ENCODE measurements at regions of chr5 and their contacts with region 1.

Region 1: DNA sequence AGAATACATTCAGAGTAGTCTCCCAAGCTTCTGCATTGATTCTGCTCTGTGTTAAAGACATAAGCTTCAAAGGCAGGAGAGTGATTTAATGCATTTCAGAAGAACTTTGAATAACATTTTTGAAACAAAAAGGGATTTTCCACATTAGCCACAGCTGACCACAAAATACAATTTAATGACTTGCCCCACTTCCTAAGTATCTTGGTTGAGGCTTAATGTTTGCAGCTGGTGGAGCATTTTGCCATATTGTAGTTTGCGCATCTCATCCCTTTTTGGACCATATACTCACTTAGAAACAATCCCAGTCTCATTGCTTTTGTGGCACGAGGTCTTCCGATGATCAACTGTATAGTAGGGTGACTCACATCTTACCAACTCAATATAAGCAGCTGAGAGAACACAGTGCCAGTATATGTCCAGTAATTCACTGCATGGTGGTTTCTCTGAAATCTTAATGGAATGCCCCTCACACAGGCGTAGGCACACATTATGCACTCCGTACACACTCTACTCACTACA is 455.8 kb upstream of the PTGER4 start:
- DNase-seq: peak; percentile 39
- H3K4me3 Mint-ChIP-seq: peak overlapping the region; percentile 66
- H3K27ac Mint-ChIP-seq: peak overlapping the region; percentile 91
- H3K4me1 Mint-ChIP-seq: peaks cover 70% of the 10 kb centered on the region
- H3K27me3 Mint-ChIP-seq: no peaks in the 10 kb centered on the region

Region 2: GRCh38 chr5:40171971-40172370 is 52.0 kb before region 1 on chr5:
- intact Hi-C with region 1: loop called (anchors 2 kb)
- DNase-seq: no peak
- H3K4me3 Mint-ChIP-seq: no peak overlapping the region
- H3K27ac Mint-ChIP-seq: no peak overlapping the region
- H3K4me1 Mint-ChIP-seq: peaks cover 8% of the 10 kb centered on the region
- H3K27me3 Mint-ChIP-seq: no peaks in the 10 kb centered on the region

Region 3: DNA sequence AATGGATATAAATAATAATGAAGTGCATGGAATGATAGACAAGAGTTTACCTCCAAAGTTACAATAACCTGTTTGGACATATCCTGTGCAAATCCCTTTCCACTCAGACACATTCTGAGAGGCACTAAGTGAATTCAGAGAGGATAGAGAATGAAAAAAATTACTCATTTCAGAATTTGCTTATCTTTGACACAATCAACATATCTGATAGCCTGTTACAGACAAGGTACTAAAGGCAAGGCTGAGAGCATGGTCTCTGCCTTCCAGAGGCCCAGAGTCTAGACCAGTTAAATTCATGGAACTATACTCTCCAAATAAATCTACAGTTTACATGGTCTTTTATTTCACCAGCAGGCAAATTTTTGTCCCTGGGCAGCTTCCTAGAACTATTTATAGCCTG is 84.0 kb after region 1 on chr5:
- intact Hi-C with region 1: loop called (anchors 1 kb)
- DNase-seq: no peak
- H3K4me3 Mint-ChIP-seq: no peak overlapping the region
- H3K27ac Mint-ChIP-seq: no peak overlapping the region
- H3K4me1 Mint-ChIP-seq: peaks cover 12% of the 10 kb centered on the region
- H3K27me3 Mint-ChIP-seq: no peaks in the 10 kb centered on the region

Region 4: GRCh38 chr5:40410231-40410861 is 186.4 kb after region 1 on chr5:
- intact Hi-C with region 1: loop called (anchors 1 kb)
- DNase-seq: peak; percentile 76
- H3K4me3 Mint-ChIP-seq: peak overlapping the region; percentile 72
- H3K27ac Mint-ChIP-seq: peak overlapping the region; percentile 95
- H3K4me1 Mint-ChIP-seq: peaks cover 70% of the 10 kb centered on the region
- H3K27me3 Mint-ChIP-seq: no peaks in the 10 kb centered on the region

Region 5: DNA sequence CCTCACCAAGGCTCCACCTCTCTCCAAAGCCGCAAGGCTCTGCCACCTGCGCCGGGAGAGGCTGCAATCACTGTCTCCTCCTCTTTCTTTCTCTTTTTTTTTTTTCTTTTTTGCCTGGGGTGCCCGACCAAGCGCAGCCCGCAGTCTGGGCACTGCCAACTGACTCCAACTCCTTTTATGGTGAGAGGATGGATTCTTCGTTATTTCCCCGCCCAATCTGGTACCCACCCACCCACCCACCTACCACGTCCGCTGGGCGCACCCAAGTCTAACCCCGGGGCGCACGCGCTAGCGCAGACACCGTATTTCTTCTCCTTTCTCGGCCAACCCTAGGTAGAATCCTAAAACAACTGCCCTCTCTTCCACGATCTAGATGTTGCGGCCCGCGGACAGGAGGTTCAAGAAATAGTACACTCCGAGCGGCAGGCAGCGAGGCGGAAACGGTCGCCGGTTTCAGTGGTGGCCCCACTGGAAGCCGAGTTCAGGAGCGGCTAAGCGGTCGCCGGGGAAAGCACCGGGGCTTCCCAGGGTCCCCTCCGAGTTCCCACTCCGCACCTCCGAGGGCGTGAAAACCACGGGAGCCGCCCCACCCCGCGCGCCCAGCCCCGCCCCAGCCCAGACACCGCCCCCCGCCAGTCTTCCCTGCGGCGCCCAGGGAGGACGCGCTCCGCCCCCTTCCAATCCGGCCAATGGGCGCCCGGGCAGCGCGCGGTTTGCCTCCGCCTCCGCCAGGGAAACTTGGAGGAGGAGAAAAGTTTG is 455.4 kb after region 1 on chr5:
- intact Hi-C with region 1: loop called (anchors 1 kb)
- DNase-seq: peak; percentile 91
- H3K4me3 Mint-ChIP-seq: peak overlapping the region; percentile 99
- H3K27ac Mint-ChIP-seq: peak overlapping the region; percentile 99
- H3K4me1 Mint-ChIP-seq: peaks cover 66% of the 10 kb centered on the region
- H3K27me3 Mint-ChIP-seq: no peaks in the 10 kb centered on the region

Region 6: GRCh38 chr5:40798012-40798855 is 574.3 kb after region 1 on chr5 and contains the start of gene PRKAA1:
- intact Hi-C with region 1: loop called (anchors 1 kb)
- DNase-seq: peak; percentile 87
- H3K4me3 Mint-ChIP-seq: peak within 1 kb of the TSS; percentile 91
- H3K27ac Mint-ChIP-seq: peak within 1 kb of the TSS; percentile 96
- H3K4me1 Mint-ChIP-seq: peaks cover 41% of the 10 kb centered on the region
- H3K27me3 Mint-ChIP-seq: no peaks in the 10 kb centered on the region
- total RNA-seq, gene PRKAA1: 56.6 and 59.0 TPM in 2 replicates